ENCODE measurements at regions of chr1 and their contacts with region 1.

Region 1: DNA sequence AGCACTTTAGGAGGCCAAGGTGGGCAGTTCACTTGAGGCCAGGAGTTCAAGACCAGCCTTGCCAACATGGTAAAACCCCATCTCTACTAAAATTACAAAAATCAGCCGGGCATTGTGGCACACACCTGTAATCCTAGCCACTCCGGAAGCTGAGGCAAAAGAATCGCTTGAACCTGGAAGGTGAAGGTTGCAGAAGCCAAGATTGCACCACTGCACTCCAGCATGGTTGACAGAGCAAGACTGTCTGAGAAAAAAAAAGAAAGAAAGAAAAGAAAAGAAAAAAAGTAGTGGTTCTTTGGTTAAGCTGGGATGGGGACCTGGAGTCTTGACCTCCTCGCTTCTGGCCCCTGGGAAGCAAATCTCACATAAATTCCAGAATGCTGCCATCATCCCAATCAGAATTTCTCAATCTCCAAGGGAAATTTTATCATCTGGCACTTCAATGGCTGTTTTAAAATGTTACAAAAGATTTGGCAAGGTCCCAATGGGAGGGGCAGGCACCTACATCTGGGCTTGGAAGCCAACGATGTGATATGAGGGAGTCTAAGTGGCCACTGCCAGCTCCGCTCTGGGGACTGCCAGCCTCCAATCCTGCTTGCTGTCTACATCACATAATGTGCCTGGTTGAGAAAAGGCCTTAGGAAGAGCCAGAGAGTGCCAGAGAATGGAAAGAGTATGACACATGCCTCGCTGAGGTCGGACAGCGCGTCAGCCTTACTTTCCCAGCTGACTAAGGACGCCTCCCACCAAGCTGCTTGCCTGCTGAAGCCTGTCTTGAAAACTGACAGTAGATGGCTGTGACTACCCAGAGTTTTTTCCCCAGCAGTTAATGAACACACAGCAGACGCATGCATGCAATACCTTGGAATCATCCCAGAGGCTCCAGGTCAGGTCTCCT is 42.1 kb upstream of the SRP9 start:
- DNase-seq: peak; percentile 79 to 90
- H3K4me3 ChIP-seq: peak overlapping the region; percentile 18; the same call in 1 of the 2 replicates
- H3K27ac ChIP-seq: peak overlapping the region; percentile 86
- H3K4me1 ChIP-seq: peaks cover 63% of the 10 kb centered on the region
- H3K27me3 ChIP-seq: no peaks in the 10 kb centered on the region
- CTCF ChIP-seq: no peak

Region 2: DNA sequence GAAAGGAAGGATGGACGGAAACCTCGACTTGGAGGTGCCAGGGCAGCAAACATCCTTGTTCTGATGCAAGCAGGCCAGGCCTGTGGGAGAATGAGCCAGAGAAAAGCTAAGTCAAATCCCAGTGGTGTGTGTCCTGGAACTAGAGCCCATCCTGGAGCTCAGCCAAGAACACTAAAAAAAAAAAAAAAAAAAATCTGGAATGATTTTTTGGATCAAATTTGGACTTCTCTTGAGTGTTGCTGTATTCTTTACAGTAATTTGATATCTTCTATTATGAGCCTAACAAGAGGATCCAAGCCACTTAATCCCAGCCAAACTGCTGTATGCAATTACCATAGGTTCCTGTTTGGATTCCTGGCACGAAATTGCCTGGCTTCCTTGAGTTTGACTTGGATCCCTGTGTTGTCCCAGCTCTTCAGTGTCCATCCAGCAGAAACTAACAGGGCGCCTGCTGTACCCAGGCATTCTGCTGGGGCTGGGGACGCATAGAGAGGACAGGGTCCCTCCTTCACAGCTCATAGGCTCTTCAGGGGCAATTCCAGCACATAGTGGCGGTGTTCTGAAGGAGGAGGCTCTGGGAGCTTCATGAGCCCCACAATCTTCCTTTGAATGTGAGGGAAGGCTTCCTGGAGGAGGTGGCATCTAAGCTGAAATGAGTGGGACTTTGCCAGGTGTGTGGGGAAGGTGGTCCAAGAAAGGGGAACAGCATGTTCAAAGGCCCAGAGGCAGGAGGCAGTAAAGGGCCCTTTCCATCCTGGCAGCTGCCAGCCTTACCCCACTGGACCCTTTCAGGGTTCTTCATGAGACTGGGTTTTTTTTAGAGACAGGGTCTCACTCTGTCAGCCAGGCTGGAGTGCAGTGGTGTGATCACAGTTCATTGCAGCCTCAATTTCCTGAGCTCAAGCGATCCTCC is 99.2 kb after region 1 on chr1:
- CTCF ChIA-PET with region 1: no interaction called
- POLR2A ChIA-PET with region 1: interaction called, 13 read pairs
- intact Hi-C with region 1: no loop called
- DNase-seq: no peak
- H3K4me3 ChIP-seq: no peak overlapping the region
- H3K27ac ChIP-seq: no peak overlapping the region
- H3K4me1 ChIP-seq: no peaks in the 10 kb centered on the region
- H3K27me3 ChIP-seq: no peaks in the 10 kb centered on the region
- CTCF ChIP-seq: no peak